ENCODE measurements at regions of chr4 and their contacts with region 1.

Region 1: GRCh38 chr4:79502081-79502480 is 94.1 kb upstream of the GK2 start:
- DNase-seq: no peak
- H3K4me3 ChIP-seq: no peak overlapping the region
- H3K27ac ChIP-seq: no peak overlapping the region
- H3K4me1 ChIP-seq: no peaks in the 10 kb centered on the region
- H3K27me3 ChIP-seq: no peaks in the 10 kb centered on the region
- CTCF ChIP-seq: no peak
- POLR2A ChIP-seq: no peak

Region 2: GRCh38 chr4:78343682-78344081 is 1158.4 kb before region 1 on chr4:
- intact Hi-C with region 1: no loop called
- DNase-seq: no peak
- H3K4me3 ChIP-seq: no peak overlapping the region
- H3K27ac ChIP-seq: no peak overlapping the region
- H3K4me1 ChIP-seq: no peaks in the 10 kb centered on the region
- H3K27me3 ChIP-seq: no peaks in the 10 kb centered on the region
- CTCF ChIP-seq: no peak
- POLR2A ChIP-seq: no peak

Region 3: GRCh38 chr4:79431839-79432238 is 70.2 kb before region 1 on chr4:
- intact Hi-C with region 1: loop called (anchors 2 kb)
- DNase-seq: no peak
- H3K4me3 ChIP-seq: no peak overlapping the region
- H3K27ac ChIP-seq: no peak overlapping the region
- H3K4me1 ChIP-seq: no peaks in the 10 kb centered on the region
- H3K27me3 ChIP-seq: no peaks in the 10 kb centered on the region
- CTCF ChIP-seq: no peak
- POLR2A ChIP-seq: no peak

Measured in breast epithelium (tissue), 4 donors.